ENCODE measurements at regions of chr22 and their contacts with region 1.

Region 1: DNA sequence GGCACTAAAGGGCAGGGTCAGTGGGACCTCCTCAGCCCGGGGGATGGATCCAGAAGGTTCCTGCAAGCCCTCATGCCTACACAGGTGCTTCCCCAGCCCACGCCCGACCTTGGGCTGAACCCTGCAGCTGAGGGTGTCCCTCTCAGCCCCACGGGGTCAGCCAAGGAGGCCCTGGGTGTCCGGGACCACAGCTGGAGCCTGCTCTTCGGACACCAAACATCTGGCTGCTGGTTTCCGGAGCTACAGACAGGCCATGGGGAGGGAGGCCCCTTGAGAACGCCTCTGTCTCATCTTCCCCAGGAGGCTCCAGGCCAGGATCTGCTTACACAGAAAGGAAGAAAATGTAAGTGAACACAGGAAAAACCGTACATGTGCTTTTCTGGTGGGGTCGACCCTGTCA is 355.7 kb downstream of the MN1 start:
- DNase-seq: no peak
- ATAC-seq: no peak
- H3K4me3 ChIP-seq: no peak overlapping the region
- H3K27ac ChIP-seq: no peak overlapping the region
- H3K4me1 ChIP-seq: no peaks in the 10 kb centered on the region
- H3K27me3 ChIP-seq: no peaks in the 10 kb centered on the region
- CTCF ChIP-seq: no peak
- EP300 ChIP-seq: no peak
- POLR2A ChIP-seq: no peak
- RAD21 ChIP-seq: no peak

Region 2: DNA sequence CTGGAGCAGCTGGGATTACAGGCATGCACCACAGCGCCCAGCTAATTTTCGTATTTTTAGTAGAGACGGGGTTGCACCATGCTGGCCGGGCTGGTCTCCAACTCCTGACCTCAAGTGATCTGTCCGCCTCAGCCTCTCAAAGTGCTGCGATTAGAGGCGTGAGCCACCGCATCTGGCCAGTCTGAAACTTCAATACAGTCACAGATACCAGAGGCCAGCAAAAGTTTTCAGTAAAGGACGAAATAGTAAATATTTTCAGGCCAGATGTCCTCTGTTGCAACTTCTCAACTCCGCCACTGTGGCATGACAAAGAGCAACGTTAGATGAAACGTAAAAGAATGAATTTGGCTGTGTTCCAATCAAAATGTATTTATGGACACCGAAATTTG is 47.9 kb before region 1 on chr22:
- CTCF ChIA-PET with region 1: no interaction called
- POLR2A ChIA-PET with region 1: no interaction called
- RAD21 ChIA-PET with region 1: no interaction called
- SMC1A ChIA-PET with region 1: no interaction called
- in situ Hi-C with region 1: loop called (anchors 5 kb)
- intact Hi-C with region 1: no loop called
- DNase-seq: no peak
- ATAC-seq: no peak
- H3K4me3 ChIP-seq: no peak overlapping the region
- H3K27ac ChIP-seq: no peak overlapping the region
- H3K4me1 ChIP-seq: no peaks in the 10 kb centered on the region
- H3K27me3 ChIP-seq: no peaks in the 10 kb centered on the region
- CTCF ChIP-seq: no peak
- EP300 ChIP-seq: no peak
- POLR2A ChIP-seq: no peak
- RAD21 ChIP-seq: no peak

Region 3: GRCh38 chr22:27461470-27461869 is 15.6 kb after region 1 on chr22:
- CTCF ChIA-PET with region 1: no interaction called
- POLR2A ChIA-PET with region 1: no interaction called
- RAD21 ChIA-PET with region 1: no interaction called
- SMC1A ChIA-PET with region 1: no interaction called
- in situ Hi-C with region 1: no loop called
- intact Hi-C with region 1: no loop called
- DNase-seq: no peak
- ATAC-seq: no peak
- H3K4me3 ChIP-seq: no peak overlapping the region
- H3K27ac ChIP-seq: no peak overlapping the region
- H3K4me1 ChIP-seq: no peaks in the 10 kb centered on the region
- H3K27me3 ChIP-seq: no peaks in the 10 kb centered on the region
- CTCF ChIP-seq: no peak
- EP300 ChIP-seq: no peak
- POLR2A ChIP-seq: no peak
- RAD21 ChIP-seq: no peak